ENCODE measurements at regions of chr15 and their contacts with region 1.

Region 1: DNA sequence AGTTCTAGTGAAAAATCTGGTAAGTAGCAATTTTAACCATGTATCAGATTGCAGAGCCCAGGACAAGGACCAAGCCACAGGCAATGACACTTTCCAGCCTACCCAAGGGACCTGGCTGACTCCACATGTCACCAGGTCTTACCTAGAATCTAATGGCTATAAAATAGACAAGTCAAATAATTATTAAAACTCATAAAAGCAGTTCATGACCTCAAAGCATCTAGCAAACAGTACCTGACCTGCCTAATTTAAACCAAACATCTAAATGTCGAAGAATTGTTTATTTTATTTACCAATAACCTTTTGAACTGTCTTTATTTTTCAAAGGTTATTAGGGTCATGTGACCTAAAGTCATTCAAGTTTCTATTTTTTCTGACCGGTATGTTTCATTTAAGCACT is 35.6 kb upstream of the MKRN3 start:
- DNase-seq: no peak

Region 2: GRCh38 chr15:23472678-23473077 is 57.2 kb before region 1 on chr15:
- intact Hi-C with region 1: no loop called
- DNase-seq: no peak

Region 3: GRCh38 chr15:23588268-23588667 is 58.4 kb after region 1 on chr15:
- intact Hi-C with region 1: loop called in 1 of 2 experiments (anchors 2 kb)
- DNase-seq: no peak

Region 4: GRCh38 chr15:23599053-23599452 is 69.2 kb after region 1 on chr15:
- intact Hi-C with region 1: no loop called
- DNase-seq: no peak

Region 5: DNA sequence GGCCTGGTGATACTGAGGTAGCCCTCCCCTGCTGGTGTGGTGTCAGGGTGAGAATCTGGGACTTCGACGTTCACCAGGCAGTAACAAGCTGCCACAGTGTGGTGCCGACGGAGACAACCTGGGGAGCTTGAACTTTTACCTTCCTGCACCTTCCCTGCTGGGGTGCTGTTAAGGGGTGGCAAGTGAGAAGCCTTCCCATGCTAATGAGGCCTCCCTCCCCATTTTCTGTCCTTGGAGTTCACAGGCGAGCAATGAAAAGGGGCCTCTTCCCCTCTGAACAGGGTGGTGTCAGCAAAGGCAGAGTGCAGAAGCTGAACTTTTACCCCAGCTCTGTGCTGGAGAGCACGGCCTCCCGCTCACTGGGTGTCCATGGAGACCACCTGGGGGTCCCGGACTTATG is 104.3 kb after region 1 on chr15:
- intact Hi-C with region 1: no loop called
- DNase-seq: no peak

Measured in posterior vena cava (tissue), 2 donors.